Calu3 (cell line): ENCODE measurements at regions of chr2 and their contacts with region 1.

Region 1: DNA sequence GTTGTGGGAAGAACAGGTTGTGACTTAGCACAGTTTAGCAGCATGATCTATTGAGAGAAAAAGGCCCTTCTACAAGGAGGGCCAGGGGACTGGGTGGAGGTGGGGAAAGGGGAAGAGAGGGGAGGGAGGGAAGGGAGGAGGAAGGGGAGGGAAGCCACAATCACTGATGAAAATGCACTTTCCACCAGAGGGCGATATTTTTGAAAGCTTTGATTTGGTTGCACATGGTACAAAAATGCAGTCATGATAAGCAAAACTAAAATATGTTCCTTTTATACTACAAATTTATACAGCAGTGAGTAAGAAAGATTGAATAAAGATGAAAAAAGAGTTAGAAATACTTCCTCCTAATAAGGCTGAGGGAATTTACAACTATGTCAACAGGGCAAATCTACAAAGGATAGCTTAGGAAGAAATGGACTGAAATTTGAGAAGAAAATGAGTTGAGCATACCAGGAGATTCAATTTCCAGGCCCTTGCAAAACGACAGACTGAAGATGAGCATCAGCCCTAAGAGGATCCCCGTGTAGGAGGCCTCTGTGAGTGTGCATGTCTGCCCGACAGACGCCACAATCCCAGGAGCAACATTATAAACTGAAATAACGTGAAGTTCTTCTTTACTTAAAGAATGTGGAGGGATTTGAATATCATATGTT is 17.2 kb downstream of the SH3YL1 start:
- DNase-seq: peak; percentile 55
- H3K4me3 Mint-ChIP-seq: no peak overlapping the region
- H3K27ac Mint-ChIP-seq: no peak overlapping the region
- H3K4me1 Mint-ChIP-seq: peaks cover 8% of the 10 kb centered on the region
- H3K27me3 Mint-ChIP-seq: no peaks in the 10 kb centered on the region
- CTCF ChIP-seq: peak; percentile 74

Region 2: GRCh38 chr2:264660-265468 is 18.2 kb after region 1 on chr2 and contains the start of gene ACP1:
- CTCF ChIA-PET with region 1: interaction called, 4 read pairs
- intact Hi-C with region 1: loop called (anchors 2 kb)
- DNase-seq: peak; percentile 99
- H3K4me3 Mint-ChIP-seq: peak within 1 kb of the TSS; percentile 99
- H3K27ac Mint-ChIP-seq: peak within 1 kb of the TSS; percentile 92
- H3K4me1 Mint-ChIP-seq: peaks cover 45% of the 10 kb centered on the region
- H3K27me3 Mint-ChIP-seq: no peaks in the 10 kb centered on the region
- CTCF ChIP-seq: no peak
- total RNA-seq, gene ACP1: 120 and 124 TPM in 2 replicates

Region 3: DNA sequence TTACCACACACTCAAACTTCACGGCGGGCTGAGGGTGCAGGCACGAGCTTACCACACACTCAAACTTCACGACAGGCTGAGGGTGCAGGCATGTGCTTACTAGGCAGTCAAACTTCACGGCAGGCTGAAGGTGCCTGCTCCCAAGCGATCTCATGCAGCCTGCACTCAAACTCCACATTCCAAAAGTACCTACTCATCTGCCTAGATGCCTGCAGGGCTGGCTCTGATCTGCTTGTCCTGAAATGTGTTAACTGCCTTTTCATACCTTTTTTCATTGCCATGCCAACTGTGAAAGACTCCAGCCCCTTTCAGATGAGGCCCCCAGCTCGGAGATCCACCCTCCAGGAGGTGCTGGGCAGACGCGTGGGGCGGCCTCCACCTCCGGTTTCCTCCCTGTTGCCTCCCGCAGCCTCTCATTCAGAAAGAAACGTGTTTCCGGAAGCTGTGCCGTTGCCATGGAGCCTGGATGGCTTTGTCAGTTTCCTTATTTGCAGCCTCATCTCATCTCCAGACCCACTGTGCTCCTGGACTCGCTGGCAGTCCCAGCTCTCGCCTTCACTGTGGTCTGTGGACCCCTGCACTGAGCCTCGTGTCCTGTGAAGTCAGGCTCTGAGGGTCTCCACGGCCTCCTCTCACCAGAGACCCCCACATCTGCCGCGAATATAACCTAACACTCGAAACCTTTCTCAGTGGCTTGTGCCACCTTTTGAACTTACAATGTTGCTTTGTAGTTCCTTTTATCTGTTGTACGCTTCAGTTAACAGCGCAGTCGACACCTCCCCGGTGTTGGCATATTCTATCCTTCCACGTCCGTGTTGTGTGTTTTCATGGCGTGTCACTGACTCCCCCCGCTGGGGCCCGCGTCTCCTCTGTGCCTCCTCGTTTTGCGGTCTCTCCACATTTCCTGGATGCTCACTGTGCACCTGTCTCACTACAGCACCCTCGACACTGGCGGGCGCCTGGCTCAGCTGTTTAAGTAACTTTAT is 147.4 kb after region 1 on chr2:
- CTCF ChIA-PET with region 1: no interaction called
- intact Hi-C with region 1: no loop called
- DNase-seq: peak; percentile 37
- H3K4me3 Mint-ChIP-seq: no peak overlapping the region
- H3K27ac Mint-ChIP-seq: no peak overlapping the region
- H3K4me1 Mint-ChIP-seq: no peaks in the 10 kb centered on the region
- H3K27me3 Mint-ChIP-seq: no peaks in the 10 kb centered on the region
- CTCF ChIP-seq: no peak